Motor neuron (in vitro differentiated cells): ENCODE measurements at regions of chr3 and their contacts with region 1.

Region 1: GRCh38 chr3:195909644-195910508 is 1.5 kb upstream of the TNK2 start:
- ATAC-seq: peak; percentile 53 to 78 (median 71)
- H3K4me3 ChIP-seq: peak overlapping the region; percentile 60 to 78 (median 67)
- H3K27ac ChIP-seq: peak overlapping the region; percentile 27 to 80
- H3K4me1 ChIP-seq: peaks cover 14 to 22% of the 10 kb centered on the region in 2 donors

Region 2: GRCh38 chr3:195411836-195412235 is 498.0 kb before region 1 on chr3:
- in situ Hi-C with region 1: no loop called
- ATAC-seq: no peak
- H3K4me3 ChIP-seq: no peak overlapping the region
- H3K27ac ChIP-seq: no peak overlapping the region
- H3K4me1 ChIP-seq: no peaks in the 10 kb centered on the region

Region 3: DNA sequence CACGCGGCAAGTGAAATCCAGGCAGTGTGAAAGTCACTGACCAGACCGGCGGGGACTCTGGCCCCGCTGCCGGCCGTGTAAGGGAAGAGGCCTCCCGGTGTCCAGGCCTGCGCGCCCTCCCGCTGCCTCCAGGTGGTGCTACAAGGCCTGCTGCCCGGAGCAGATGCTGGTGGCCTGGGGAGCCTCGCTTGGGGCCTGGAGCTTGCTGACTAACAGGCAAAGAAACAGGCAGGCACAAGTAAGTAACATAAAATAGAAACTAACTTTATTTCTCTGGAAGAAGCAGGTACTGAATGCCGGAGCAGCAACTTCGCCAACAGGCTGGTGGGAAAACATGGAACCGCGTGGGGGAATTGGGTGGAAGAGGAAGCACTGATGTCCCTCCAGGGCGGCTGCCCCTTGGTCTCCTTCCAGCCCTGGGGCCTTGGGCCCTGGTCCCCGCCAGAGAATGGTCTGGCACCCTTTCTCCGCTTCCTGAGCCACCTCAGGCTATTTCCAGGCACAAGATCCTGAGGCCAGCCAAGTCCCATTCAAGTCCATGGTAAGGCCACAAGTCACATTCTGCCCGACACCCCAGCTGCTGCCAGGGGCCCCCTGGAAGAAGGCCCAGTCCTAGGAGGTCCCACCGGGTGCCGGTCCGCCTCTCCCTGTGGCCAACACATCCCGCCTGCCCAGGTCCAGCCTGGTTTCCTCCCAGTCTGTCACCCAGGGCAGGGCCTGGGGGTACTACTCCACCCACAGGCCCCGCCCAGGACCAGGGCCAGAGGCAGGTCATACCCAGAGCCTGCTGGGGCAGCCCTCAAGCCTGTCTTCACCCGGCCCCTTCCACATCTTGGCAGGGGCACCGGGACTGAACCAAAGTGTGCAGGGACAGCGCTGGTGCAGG is 46.5 kb before region 1 on chr3:
- in situ Hi-C with region 1: loop called in 1 of 9 experiments (anchors 10 kb)
- ATAC-seq: peak; percentile 90 to 97 (median 94)
- H3K4me3 ChIP-seq: no peak overlapping the region
- H3K27ac ChIP-seq: no peak overlapping the region
- H3K4me1 ChIP-seq: peaks cover 4% of the 10 kb centered on the region in 2 donors